MCF 10A (cell line): ENCODE measurements at regions of chr7 and their contacts with region 1.

Region 1: DNA sequence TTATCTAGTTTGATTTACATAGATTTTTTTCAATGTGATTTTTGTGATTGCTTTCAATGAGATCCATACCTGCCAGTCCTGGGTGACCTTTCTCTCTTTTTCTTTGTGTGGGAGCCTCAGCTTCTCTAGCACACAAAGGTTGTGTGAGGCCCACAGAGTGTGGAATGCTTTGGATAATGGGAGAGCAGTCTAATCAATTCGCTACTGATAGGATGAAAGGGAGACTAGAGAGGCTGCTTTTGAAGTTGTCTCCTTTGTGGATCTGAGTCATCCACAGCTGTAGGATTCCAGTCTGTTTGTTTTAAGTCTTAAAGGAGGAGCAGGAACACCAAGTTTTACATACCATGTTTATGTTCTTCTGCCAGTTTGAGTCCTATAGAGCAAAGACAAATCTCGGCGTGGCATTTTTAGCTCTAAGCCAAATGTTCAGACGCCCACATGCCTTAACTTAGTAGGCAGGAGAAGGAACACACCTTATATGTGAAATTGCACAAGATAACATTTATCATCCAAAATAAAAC is 330.0 kb downstream of the ARL4A start:
- DNase-seq: peak; percentile 83
- H3K4me3 Mint-ChIP-seq: peak overlapping the region; percentile 44
- H3K27ac Mint-ChIP-seq: peak overlapping the region; percentile 65
- H3K4me1 Mint-ChIP-seq: peaks cover 8% of the 10 kb centered on the region
- H3K27me3 Mint-ChIP-seq: no peaks in the 10 kb centered on the region
- CTCF ChIP-seq: no peak

Region 2: GRCh38 chr7:12888717-12889116 is 128.7 kb before region 1 on chr7:
- CTCF ChIA-PET with region 1: no interaction called
- POLR2A ChIA-PET with region 1: no interaction called
- intact Hi-C with region 1: no loop called
- DNase-seq: no peak
- H3K4me3 Mint-ChIP-seq: no peak overlapping the region
- H3K27ac Mint-ChIP-seq: no peak overlapping the region
- H3K4me1 Mint-ChIP-seq: peaks cover 11% of the 10 kb centered on the region
- H3K27me3 Mint-ChIP-seq: no peaks in the 10 kb centered on the region
- CTCF ChIP-seq: no peak

Region 3: DNA sequence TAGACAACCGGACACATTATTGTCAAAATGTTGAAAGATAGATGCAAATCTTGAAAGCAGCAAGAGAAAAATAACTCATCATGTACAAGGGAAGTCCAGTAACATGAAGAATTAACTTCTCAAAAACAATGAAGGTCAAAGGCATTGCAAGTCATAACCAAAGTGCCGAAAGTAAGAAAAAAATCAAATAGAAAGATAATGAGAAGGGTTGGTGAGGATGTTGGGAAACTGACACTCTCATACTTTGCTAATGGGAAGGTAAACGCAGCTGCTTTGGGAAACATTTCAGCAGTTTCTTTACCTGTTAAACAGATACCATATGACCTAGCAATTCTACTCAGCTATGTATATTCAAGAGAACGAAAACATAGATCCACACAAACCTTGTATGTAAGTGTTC is 27.0 kb before region 1 on chr7:
- CTCF ChIA-PET with region 1: no interaction called
- POLR2A ChIA-PET with region 1: interaction called, 14 read pairs
- intact Hi-C with region 1: no loop called
- DNase-seq: no peak
- H3K4me3 Mint-ChIP-seq: no peak overlapping the region
- H3K27ac Mint-ChIP-seq: no peak overlapping the region
- H3K4me1 Mint-ChIP-seq: peaks cover 10% of the 10 kb centered on the region
- H3K27me3 Mint-ChIP-seq: no peaks in the 10 kb centered on the region
- CTCF ChIP-seq: no peak

Region 4: GRCh38 chr7:13032576-13032975 is 15.2 kb after region 1 on chr7:
- CTCF ChIA-PET with region 1: interaction called, 3 read pairs
- POLR2A ChIA-PET with region 1: interaction called, 10 read pairs
- intact Hi-C with region 1: no loop called
- DNase-seq: no peak
- H3K4me3 Mint-ChIP-seq: no peak overlapping the region
- H3K27ac Mint-ChIP-seq: no peak overlapping the region
- H3K4me1 Mint-ChIP-seq: peaks cover 21% of the 10 kb centered on the region
- H3K27me3 Mint-ChIP-seq: no peaks in the 10 kb centered on the region
- CTCF ChIP-seq: no peak